IMR-90 (cell line): ENCODE measurements at regions of chr20 and their contacts with region 1.

Region 1: GRCh38 chr20:8722276-8722928 is 346.5 kb upstream of the PLCB4 start:
- DNase-seq: peak; percentile 77
- ATAC-seq: peak; percentile 86
- H3K4me3 ChIP-seq: no peak overlapping the region
- H3K27ac ChIP-seq: no peak overlapping the region
- H3K4me1 ChIP-seq: no peaks in the 10 kb centered on the region
- H3K27me3 ChIP-seq: no peaks in the 10 kb centered on the region
- CTCF ChIP-seq: peak; percentile 94
- POLR2A ChIP-seq: no peak
- RAD21 ChIP-seq: peak; percentile 98

Region 2: GRCh38 chr20:6767536-6768227 is 1954.7 kb before region 1 on chr20 and contains the start of gene BMP2:
- CTCF ChIA-PET with region 1: no interaction called
- POLR2A ChIA-PET with region 1: no interaction called
- dilution Hi-C with region 1: no loop called
- in situ Hi-C with region 1: no loop called
- intact Hi-C with region 1: loop called (anchors 5 kb)
- DNase-seq: peak; percentile 50
- ATAC-seq: peak; percentile 82
- H3K4me3 ChIP-seq: peak within 1 kb of the TSS; percentile 77
- H3K27ac ChIP-seq: peak within 1 kb of the TSS; percentile 14; the same call in 1 of the 2 replicates
- H3K4me1 ChIP-seq: no peaks in the 10 kb centered on the region
- H3K27me3 ChIP-seq: peaks cover 16% of the 10 kb centered on the region
- CTCF ChIP-seq: no peak
- POLR2A ChIP-seq: no peak
- RAD21 ChIP-seq: no peak
- total RNA-seq, gene BMP2: 0.18 and 0.28 TPM in 2 replicates

Region 3: DNA sequence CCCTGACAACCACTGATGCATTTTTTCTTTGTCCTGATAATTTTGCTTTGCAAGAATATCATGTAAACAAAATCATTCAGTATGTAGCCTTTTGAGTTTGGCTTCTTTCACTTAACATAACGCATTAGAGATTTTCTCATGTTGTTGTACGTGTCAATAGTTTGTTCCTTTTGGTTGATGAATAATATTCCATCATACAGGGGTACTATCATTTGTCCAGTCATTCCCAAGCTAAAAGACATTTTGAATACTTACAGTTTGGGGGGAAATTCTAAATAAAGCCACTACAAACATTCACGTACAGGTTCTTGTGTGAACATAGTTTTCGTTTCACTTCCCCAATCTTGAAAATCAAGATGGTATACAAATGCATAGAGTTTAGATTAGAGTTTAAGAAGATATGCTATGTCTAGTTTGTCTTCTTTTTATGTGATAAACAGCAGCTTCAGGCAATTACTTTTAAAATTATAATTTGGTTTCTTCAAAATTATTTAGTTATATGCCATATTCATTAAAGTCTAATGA is 787.3 kb before region 1 on chr20:
- CTCF ChIA-PET with region 1: interaction called, 73 read pairs
- POLR2A ChIA-PET with region 1: no interaction called
- dilution Hi-C with region 1: no loop called
- in situ Hi-C with region 1: loop called (anchors 5 kb)
- intact Hi-C with region 1: loop called (anchors 1 kb)
- DNase-seq: no peak
- ATAC-seq: no peak
- H3K4me3 ChIP-seq: no peak overlapping the region
- H3K27ac ChIP-seq: no peak overlapping the region
- H3K4me1 ChIP-seq: no peaks in the 10 kb centered on the region
- H3K27me3 ChIP-seq: peaks cover 9% of the 10 kb centered on the region
- CTCF ChIP-seq: no peak
- POLR2A ChIP-seq: no peak
- RAD21 ChIP-seq: no peak

Region 4: DNA sequence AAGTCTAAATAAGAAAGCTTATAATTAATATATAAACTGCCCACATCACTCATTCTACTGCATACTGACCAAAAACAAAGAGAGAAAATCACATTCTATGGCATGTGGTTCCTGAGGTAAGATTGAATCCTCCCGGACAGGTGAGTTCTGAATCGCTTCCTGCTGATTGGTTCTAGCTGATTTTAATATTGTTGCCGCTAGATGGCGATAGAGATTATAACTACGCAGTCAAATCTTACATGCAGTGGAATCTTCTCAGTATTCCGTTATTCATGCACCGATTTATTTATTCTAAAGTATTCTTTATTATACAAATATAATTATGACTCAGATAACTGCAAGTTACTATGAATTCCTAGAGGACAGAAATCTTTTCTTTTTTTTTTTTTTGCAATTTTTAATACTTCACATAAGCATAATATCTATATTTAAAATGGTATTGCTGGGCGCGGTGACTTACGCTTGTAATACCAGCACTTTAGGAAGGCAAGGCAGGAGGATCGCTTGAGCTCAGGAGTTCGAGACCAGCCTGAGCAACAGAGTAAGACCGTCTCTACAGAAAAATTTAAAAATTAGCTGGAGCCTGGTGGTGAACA is 678.6 kb before region 1 on chr20:
- CTCF ChIA-PET with region 1: interaction called, 49 read pairs
- POLR2A ChIA-PET with region 1: interaction called, 8 read pairs
- dilution Hi-C with region 1: no loop called
- in situ Hi-C with region 1: loop called (anchors 5 kb)
- intact Hi-C with region 1: loop called (anchors 1 kb)
- DNase-seq: peak; percentile 68
- ATAC-seq: peak; percentile 62
- H3K4me3 ChIP-seq: no peak overlapping the region
- H3K27ac ChIP-seq: no peak overlapping the region
- H3K4me1 ChIP-seq: no peaks in the 10 kb centered on the region
- H3K27me3 ChIP-seq: peaks cover 7% of the 10 kb centered on the region
- CTCF ChIP-seq: peak; percentile 71
- POLR2A ChIP-seq: no peak
- RAD21 ChIP-seq: peak; percentile 73

Region 5: DNA sequence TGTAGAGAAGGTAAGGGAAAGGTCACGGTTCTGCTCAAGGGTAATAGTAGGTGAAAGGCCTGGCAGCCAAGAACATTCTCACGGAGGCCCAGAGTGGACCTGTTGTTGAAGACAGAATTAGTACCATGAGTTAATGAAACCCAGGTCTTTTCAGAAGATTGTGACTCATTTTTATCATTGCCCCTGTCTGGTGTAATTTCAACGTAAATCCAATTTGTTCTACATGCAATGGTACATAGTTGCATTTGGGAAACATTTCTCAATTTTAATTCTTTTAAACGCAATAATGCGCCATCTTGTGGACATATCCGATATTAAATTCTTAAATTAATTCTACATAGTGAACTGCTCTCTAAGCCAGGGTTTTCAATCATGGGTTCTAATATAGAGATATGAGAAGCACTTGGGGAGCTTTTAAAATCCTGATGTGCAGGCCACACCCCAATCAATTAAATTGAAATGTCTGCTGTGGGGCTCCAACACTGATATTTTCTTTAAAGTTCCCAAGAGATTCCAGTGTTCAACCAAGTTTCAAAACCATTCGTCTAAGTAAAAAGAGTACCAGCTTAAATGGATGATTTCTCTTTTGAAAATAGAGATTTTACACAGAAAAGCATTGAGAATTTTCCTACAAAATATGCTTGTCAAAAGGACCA is 332.9 kb before region 1 on chr20:
- CTCF ChIA-PET with region 1: interaction called, 9 read pairs
- POLR2A ChIA-PET with region 1: no interaction called
- dilution Hi-C with region 1: no loop called
- in situ Hi-C with region 1: no loop called
- intact Hi-C with region 1: loop called (anchors 1 kb)
- DNase-seq: peak; percentile 59
- ATAC-seq: peak; percentile 27; the same call in 1 of the 2 replicates
- H3K4me3 ChIP-seq: no peak overlapping the region
- H3K27ac ChIP-seq: no peak overlapping the region
- H3K4me1 ChIP-seq: peaks cover 7% of the 10 kb centered on the region
- H3K27me3 ChIP-seq: no peaks in the 10 kb centered on the region
- CTCF ChIP-seq: peak; percentile 51
- POLR2A ChIP-seq: no peak
- RAD21 ChIP-seq: peak; percentile 41

Region 6: DNA sequence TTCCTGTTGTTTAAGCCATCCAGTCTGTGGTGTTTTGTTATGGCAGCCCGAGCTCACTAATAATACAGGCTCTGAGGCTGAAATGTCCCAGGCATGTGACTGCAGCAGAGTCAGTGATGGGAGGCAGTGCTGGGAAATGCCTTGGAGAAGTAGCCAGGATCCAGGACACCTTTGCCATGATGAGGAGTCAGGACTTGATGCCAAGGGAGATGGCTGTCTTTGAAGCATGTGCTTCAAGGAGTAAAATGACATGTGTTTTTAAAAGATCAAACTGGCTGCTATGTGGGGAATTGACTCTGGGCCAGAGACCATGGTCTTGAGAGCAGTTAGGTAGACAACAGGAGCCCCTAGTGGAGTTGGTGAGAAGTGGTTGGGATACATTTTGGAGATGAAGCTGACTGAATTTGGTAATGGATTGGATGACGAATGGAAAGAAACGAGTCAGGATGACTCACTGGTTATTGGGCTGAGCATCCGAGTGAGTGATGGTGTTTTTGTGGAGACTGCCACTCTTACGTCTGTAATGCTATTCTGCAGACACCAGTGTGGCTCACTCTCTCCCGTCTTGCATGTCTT is 268.2 kb before region 1 on chr20:
- CTCF ChIA-PET with region 1: no interaction called
- POLR2A ChIA-PET with region 1: no interaction called
- dilution Hi-C with region 1: no loop called
- in situ Hi-C with region 1: no loop called
- intact Hi-C with region 1: loop called (anchors 2 kb)
- DNase-seq: peak; percentile 97
- ATAC-seq: peak; percentile 96
- H3K4me3 ChIP-seq: no peak overlapping the region
- H3K27ac ChIP-seq: no peak overlapping the region
- H3K4me1 ChIP-seq: peaks cover 3% of the 10 kb centered on the region
- H3K27me3 ChIP-seq: no peaks in the 10 kb centered on the region
- CTCF ChIP-seq: peak; percentile 73
- POLR2A ChIP-seq: no peak
- RAD21 ChIP-seq: peak; percentile 82

Region 7: DNA sequence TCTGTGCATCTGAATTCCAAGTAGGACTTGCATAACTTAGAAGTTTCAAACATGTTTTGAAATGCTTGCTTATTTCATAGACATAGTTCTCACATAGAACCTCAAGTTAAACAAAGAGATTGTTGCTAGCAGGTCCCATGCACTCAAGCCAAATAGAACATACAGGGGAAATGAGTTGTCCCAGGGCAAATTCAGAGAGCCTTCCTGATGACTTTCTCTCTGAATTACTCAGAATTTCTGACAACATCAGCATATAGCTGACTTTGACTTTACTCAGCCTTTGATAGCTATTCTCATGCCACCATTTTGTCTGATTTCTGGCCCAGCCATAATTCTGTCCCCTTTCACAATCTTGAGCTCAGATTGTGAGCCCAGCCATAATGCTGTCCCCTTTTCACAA is 13.3 kb after region 1 on chr20:
- CTCF ChIA-PET with region 1: interaction called, 11 read pairs
- POLR2A ChIA-PET with region 1: no interaction called
- dilution Hi-C with region 1: no loop called
- in situ Hi-C with region 1: no loop called
- intact Hi-C with region 1: no loop called
- DNase-seq: peak; percentile 30
- ATAC-seq: no peak
- H3K4me3 ChIP-seq: no peak overlapping the region
- H3K27ac ChIP-seq: no peak overlapping the region
- H3K4me1 ChIP-seq: no peaks in the 10 kb centered on the region; the same call in 1 of the 2 replicates
- H3K27me3 ChIP-seq: no peaks in the 10 kb centered on the region
- CTCF ChIP-seq: no peak
- POLR2A ChIP-seq: no peak
- RAD21 ChIP-seq: no peak